Activated naive CD4-positive, alpha-beta T cell treated with anti-CD3 and anti-CD28 coated beads for 36 hours (primary cell): ENCODE measurements at regions of chr3 and their contacts with region 1.

Region 1: GRCh38 chr3:11626084-11626463 is 17.6 kb downstream of the VGLL4 start:
- DNase-seq: peak; percentile 54
- H3K4me3 Mint-ChIP-seq: no peak overlapping the region
- H3K27ac Mint-ChIP-seq: no peak overlapping the region
- H3K4me1 Mint-ChIP-seq: peaks cover 60% of the 10 kb centered on the region
- H3K27me3 Mint-ChIP-seq: no peaks in the 10 kb centered on the region

Region 2: GRCh38 chr3:10366651-10367101 is 1259.4 kb before region 1 on chr3:
- CTCF ChIA-PET with region 1: no interaction called
- intact Hi-C with region 1: loop called (anchors 5 kb)
- DNase-seq: peak; percentile 67
- H3K4me3 Mint-ChIP-seq: no peak overlapping the region
- H3K27ac Mint-ChIP-seq: peak overlapping the region; percentile 2
- H3K4me1 Mint-ChIP-seq: peaks cover 37% of the 10 kb centered on the region
- H3K27me3 Mint-ChIP-seq: peaks cover 10% of the 10 kb centered on the region

Region 3: DNA sequence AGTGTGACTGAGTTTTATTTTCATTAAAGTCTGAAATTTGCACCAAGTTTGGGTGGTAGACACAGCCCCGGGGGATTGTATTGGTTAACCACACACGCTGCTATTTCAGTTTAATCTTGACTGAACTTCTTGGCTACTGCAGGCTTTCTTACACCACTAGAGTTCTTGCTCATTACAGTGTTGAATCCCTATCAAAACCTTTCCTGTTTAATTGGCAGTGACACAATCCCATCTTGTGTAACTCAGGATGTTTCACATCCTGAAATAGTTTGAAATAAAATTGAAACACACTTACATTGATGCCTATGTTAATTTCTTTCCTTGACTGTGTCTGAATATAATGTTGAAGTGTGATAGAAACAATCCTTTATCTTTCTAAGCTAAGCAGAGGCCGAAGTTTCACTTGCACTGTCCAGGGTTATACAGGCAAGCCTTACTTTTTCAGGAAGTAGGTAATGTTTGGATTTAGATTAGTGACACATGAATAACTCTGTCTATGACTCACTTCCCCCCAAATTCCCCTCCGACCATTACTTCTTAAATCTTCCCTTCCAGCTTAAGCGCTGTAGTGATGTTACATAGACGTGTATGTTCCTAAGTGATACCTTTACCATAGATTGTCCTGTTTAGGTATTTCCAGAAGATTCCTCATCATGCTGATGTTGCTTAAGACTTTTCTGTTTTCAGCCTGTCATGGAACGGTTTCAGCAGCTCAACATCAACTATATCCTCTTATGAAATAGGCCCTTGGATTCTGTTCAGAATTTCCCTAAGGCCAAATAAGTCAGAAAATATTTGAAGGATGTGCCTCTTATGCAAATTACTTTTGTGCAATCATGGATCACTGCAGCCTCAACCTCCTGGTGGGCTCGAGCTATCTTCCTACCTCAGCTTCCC is 337.0 kb before region 1 on chr3:
- CTCF ChIA-PET with region 1: no interaction called
- intact Hi-C with region 1: loop called (anchors 2 kb)
- DNase-seq: peak; percentile 14
- H3K4me3 Mint-ChIP-seq: no peak overlapping the region
- H3K27ac Mint-ChIP-seq: peak overlapping the region; percentile 84
- H3K4me1 Mint-ChIP-seq: peaks cover 48% of the 10 kb centered on the region
- H3K27me3 Mint-ChIP-seq: no peaks in the 10 kb centered on the region

Region 4: GRCh38 chr3:11477407-11477911 is 148.6 kb before region 1 on chr3:
- CTCF ChIA-PET with region 1: no interaction called
- intact Hi-C with region 1: no loop called
- DNase-seq: no peak
- H3K4me3 Mint-ChIP-seq: no peak overlapping the region
- H3K27ac Mint-ChIP-seq: no peak overlapping the region
- H3K4me1 Mint-ChIP-seq: no peaks in the 10 kb centered on the region
- H3K27me3 Mint-ChIP-seq: no peaks in the 10 kb centered on the region

Region 5: DNA sequence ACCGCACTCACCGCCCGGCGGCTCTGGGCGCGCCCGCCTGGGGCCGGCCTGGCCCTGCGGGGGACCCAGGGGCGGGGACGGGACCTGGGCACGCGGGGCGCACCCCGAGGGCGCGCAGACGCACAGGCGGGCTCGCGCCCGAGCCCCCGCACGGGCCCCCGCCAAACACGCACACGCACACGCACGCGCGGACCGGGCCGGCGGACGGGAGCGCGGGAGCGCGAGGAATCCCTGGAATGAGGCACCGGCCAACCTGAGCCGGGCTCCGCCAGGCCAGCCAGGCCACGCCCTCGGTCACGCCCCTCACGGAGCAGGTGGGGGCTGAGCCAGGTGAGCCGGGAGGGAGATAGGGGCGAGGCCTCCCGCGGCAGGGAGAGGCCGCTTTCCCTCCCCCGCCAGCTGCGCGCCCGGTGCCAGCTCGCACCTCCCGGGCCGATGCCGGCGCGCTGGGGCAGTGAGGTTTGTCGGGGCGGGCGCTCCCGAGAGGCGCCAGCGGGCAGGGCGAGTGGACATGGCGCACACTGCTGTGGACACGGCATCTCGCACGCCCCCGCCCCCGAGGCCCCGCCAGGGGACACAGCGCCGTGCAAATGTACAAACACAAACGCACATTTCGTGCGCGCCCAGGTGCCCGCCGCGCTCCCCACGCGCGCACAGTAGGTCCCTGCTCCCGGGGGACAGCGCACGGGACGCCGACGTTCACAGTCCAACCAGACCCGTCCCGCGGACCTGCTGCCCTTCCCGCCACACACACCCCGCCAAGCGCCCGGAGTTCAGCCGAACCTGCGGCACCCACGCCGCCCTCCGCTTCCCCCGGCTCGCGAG is 93.5 kb after region 1 on chr3:
- CTCF ChIA-PET with region 1: no interaction called
- intact Hi-C with region 1: loop called (anchors 2 kb)
- DNase-seq: peak; percentile 73
- H3K4me3 Mint-ChIP-seq: peak overlapping the region; percentile 88
- H3K27ac Mint-ChIP-seq: no peak overlapping the region
- H3K4me1 Mint-ChIP-seq: peaks cover 17% of the 10 kb centered on the region
- H3K27me3 Mint-ChIP-seq: peaks cover 5% of the 10 kb centered on the region

Region 6: GRCh38 chr3:12193485-12194165 is 567.6 kb after region 1 on chr3:
- CTCF ChIA-PET with region 1: no interaction called
- intact Hi-C with region 1: loop called (anchors 5 kb)
- DNase-seq: peak; percentile 62
- H3K4me3 Mint-ChIP-seq: no peak overlapping the region
- H3K27ac Mint-ChIP-seq: peak overlapping the region; percentile 84
- H3K4me1 Mint-ChIP-seq: peaks cover 41% of the 10 kb centered on the region
- H3K27me3 Mint-ChIP-seq: peaks cover 3% of the 10 kb centered on the region